Activated CD8-positive, alpha-beta memory T cell treated with anti-CD3 and anti-CD28 coated beads, Interleukin-2, amount 10 ng/mL, durations not matched to agents 7 days and 5 days (primary cell): ENCODE measurements at regions of chr7 and their contacts with region 1.

Region 1: GRCh38 chr7:111076205-111076604 is 14.7 kb upstream of the LRRN3 start:
- DNase-seq: peak; percentile 70
- ATAC-seq: peak; percentile 77
- H3K4me3 Mint-ChIP-seq: no peak overlapping the region
- H3K27ac Mint-ChIP-seq: peak overlapping the region; percentile 78
- H3K4me1 Mint-ChIP-seq: peaks cover 72% of the 10 kb centered on the region
- H3K27me3 Mint-ChIP-seq: no peaks in the 10 kb centered on the region

Region 2: DNA sequence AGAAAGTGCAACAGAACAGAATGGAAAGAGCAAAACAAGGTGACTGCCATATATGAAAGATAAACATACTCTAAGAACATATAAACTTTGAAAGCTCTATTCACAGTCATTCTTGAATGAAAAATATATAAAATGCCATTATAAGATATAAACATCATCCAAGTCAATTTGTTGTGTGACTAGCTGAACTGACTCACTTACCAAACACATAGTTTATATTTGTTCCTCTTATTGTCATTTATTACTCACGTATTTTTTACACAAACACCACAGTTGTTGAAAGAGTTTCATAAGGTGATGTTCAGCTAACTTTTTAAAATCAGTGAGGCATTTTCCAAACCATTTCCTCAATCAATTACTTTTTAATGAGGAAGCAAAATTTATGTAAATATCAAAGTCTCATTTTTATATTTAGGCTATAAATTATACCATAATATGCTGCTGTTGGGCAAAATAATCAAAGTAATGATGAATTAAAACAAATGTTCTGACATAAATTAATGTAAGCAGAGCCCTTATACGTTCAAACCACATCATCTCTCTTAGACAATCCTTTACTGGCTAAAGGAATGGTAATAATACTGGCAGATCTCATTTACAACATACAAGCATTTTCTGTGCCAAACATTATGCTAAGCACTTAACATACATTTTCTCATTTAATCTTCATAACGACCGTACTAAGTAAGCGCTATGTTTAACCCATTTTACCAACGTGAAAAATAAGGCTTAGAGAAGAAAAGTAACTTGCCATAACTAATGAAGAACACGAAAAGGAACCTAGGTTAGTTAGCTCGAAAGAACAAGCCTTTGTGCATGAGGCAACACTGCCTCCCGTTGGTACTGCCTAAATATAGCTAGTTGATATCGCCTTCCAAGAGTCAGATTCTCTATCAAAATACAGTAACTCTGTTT is 22.1 kb after region 1 on chr7:
- CTCF ChIA-PET with region 1: interaction called, 18 read pairs
- DNase-seq: peak; percentile 78
- ATAC-seq: peak; percentile 87
- H3K4me3 Mint-ChIP-seq: peak overlapping the region; percentile 75
- H3K27ac Mint-ChIP-seq: peak overlapping the region; percentile 75
- H3K4me1 Mint-ChIP-seq: peaks cover 58% of the 10 kb centered on the region
- H3K27me3 Mint-ChIP-seq: no peaks in the 10 kb centered on the region